SK-N-SH (cell line): ENCODE measurements at regions of chr1 and their contacts with region 1.

Region 1: DNA sequence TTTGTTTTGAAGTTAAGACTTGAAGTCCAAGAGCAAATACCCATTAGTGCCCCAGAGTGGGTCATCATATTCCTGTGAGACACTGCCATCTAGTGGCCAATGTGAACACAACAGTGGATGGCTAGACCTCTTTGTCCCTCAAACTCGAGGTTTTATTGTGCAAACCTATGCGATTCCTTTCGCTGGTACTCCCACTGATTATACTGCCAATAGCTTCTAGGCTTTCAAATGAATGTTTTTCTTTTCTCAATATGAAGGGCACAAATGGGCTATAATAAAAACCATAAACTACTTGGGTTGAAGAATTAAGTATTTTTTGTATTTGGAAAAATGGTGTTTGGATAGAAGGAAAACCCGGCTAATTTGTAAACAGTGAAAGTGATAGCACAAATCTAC is 100.4 kb upstream of the ZNF281 start:
- DNase-seq: peak; percentile 79
- H3K4me3 ChIP-seq: no peak overlapping the region
- H3K27ac ChIP-seq: no peak overlapping the region
- H3K4me1 ChIP-seq: no peaks in the 10 kb centered on the region
- H3K27me3 ChIP-seq: peaks cover 6% of the 10 kb centered on the region; the same call in 1 of the 2 replicates
- CTCF ChIP-seq: peak; percentile 97
- EP300 ChIP-seq: no peak
- RAD21 ChIP-seq: peak; percentile 95

Region 2: GRCh38 chr1:199684686-199685273 is 825.4 kb before region 1 on chr1:
- CTCF ChIA-PET with region 1: interaction called, 12 read pairs
- POLR2A ChIA-PET with region 1: no interaction called
- DNase-seq: peak; percentile 46
- H3K4me3 ChIP-seq: no peak overlapping the region; a peak in 1 of 4 replicates
- H3K27ac ChIP-seq: no peak overlapping the region
- H3K4me1 ChIP-seq: peaks cover 2 to 16% of the 10 kb centered on the region in 2 experiments; a peak in 2 of 4 replicates
- H3K27me3 ChIP-seq: no peaks in the 10 kb centered on the region
- CTCF ChIP-seq: peak; percentile 92
- EP300 ChIP-seq: no peak
- RAD21 ChIP-seq: peak; percentile 93

Region 3: DNA sequence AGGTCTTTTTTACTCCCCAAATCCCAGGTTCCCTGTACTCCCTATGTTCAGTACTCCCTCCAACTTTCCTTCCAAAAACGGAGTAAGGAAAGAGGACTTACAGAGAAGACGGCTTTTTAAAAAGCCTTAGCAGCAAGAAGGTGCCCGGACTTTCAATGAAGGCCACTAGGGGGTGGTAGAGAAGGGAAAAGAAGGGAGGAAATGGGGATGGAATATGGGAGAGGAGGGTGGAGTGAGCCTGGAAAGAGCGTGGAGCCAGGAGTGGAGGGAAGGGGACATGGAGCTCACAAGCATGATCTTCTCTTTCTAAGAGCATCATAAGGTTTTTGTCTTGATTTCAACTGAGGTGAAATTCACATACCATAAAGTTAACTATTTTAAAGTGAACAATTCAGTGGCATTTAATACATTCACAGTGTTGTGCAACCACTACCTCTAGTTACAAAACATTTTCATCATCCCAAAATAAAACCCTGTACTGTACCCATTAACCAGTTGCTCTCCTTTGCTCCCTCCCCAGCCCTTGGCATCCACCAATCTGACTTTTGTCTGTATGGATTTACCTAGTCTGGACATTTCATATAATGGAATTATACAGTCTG is 230.3 kb before region 1 on chr1:
- CTCF ChIA-PET with region 1: interaction called, 12 read pairs
- POLR2A ChIA-PET with region 1: no interaction called
- DNase-seq: peak; percentile 62
- H3K4me3 ChIP-seq: no peak overlapping the region
- H3K27ac ChIP-seq: no peak overlapping the region
- H3K4me1 ChIP-seq: peaks cover 0 to 4% of the 10 kb centered on the region in 2 experiments; a peak in 1 of 4 replicates
- H3K27me3 ChIP-seq: no peaks in the 10 kb centered on the region
- CTCF ChIP-seq: peak; percentile 74
- EP300 ChIP-seq: no peak
- RAD21 ChIP-seq: peak; percentile 74

Region 4: GRCh38 chr1:200448034-200448762 is 62.0 kb before region 1 on chr1:
- CTCF ChIA-PET with region 1: no interaction called
- POLR2A ChIA-PET with region 1: no interaction called
- DNase-seq: no peak
- H3K4me3 ChIP-seq: no peak overlapping the region
- H3K27ac ChIP-seq: no peak overlapping the region
- H3K4me1 ChIP-seq: no peaks in the 10 kb centered on the region
- H3K27me3 ChIP-seq: no peaks in the 10 kb centered on the region
- CTCF ChIP-seq: no peak
- EP300 ChIP-seq: no peak
- RAD21 ChIP-seq: no peak

Region 5: GRCh38 chr1:200525090-200525987 is 15.1 kb after region 1 on chr1:
- CTCF ChIA-PET with region 1: interaction called, 21 read pairs
- POLR2A ChIA-PET with region 1: no interaction called
- DNase-seq: no peak
- H3K4me3 ChIP-seq: no peak overlapping the region
- H3K27ac ChIP-seq: no peak overlapping the region
- H3K4me1 ChIP-seq: no peaks in the 10 kb centered on the region
- H3K27me3 ChIP-seq: no peaks in the 10 kb centered on the region; the same call in 1 of the 2 replicates
- CTCF ChIP-seq: no peak
- EP300 ChIP-seq: no peak
- RAD21 ChIP-seq: no peak